AG04449 (cell line): ENCODE measurements at regions of chr6 and their contacts with region 1.

Region 1: DNA sequence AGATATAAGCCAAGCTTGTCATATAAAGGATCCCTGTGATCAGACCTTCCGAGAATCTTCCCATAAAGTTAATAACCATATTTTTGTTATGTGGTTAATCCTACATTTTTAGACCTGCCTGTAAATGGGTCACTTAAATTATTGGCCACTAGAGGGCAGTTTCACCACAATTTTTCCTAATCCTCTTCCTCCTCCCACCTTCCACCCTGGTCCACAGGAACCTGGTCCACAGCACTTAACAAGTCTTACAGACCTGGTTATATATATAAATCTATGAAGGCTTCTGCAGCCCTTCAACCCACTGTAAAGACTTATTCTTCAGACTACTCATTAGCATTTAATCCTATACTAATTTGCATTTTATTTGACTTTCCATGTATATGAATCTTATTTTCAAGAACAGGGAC is 28.3 kb downstream of the MRS2 start:
- DNase-seq: no peak
- H3K4me3 ChIP-seq: no peak overlapping the region
- CTCF ChIP-seq: peak; percentile 35

Region 2: GRCh38 chr6:24415753-24416152 is 15.3 kb before region 1 on chr6:
- CTCF ChIA-PET with region 1: interaction called, 13 read pairs
- POLR2A ChIA-PET with region 1: no interaction called
- DNase-seq: no peak
- H3K4me3 ChIP-seq: no peak overlapping the region
- CTCF ChIP-seq: no peak

Region 3: GRCh38 chr6:24444588-24444987 is 13.5 kb after region 1 on chr6:
- CTCF ChIA-PET with region 1: interaction called, 16 read pairs
- POLR2A ChIA-PET with region 1: no interaction called
- DNase-seq: no peak
- H3K4me3 ChIP-seq: no peak overlapping the region
- CTCF ChIP-seq: no peak

Region 4: DNA sequence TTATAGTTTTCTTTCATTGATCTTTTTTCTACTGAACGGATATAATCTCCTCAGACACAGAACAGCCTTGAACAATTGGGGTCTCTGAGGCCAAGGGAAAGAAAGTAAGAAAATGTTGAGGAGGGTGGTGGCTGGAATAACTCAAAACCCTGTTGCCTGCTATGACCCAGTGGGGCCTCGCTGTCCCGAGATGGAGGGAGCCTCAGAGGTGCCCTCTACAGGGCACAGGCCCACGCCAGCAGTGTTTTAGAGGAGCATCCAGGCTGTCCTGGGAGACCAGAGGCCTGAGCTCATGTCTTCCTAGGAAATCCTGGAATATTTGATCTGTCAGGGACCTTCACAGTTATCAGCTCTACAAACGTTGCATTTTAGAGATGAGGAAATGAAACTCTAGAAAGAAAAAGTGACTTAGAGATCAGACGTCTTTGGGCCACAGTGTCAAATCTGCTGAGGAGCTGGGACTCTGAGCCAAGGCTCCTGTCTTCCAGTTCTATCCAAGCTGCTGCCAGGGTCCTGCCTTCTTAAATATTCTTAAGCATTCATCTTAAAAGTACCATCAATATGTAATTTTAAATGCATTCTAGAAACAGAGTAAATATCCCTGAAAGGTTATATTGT is 90.0 kb after region 1 on chr6:
- CTCF ChIA-PET with region 1: interaction called, 26 read pairs
- POLR2A ChIA-PET with region 1: no interaction called
- DNase-seq: no peak
- H3K4me3 ChIP-seq: no peak overlapping the region
- CTCF ChIP-seq: peak; percentile 81

Region 5: DNA sequence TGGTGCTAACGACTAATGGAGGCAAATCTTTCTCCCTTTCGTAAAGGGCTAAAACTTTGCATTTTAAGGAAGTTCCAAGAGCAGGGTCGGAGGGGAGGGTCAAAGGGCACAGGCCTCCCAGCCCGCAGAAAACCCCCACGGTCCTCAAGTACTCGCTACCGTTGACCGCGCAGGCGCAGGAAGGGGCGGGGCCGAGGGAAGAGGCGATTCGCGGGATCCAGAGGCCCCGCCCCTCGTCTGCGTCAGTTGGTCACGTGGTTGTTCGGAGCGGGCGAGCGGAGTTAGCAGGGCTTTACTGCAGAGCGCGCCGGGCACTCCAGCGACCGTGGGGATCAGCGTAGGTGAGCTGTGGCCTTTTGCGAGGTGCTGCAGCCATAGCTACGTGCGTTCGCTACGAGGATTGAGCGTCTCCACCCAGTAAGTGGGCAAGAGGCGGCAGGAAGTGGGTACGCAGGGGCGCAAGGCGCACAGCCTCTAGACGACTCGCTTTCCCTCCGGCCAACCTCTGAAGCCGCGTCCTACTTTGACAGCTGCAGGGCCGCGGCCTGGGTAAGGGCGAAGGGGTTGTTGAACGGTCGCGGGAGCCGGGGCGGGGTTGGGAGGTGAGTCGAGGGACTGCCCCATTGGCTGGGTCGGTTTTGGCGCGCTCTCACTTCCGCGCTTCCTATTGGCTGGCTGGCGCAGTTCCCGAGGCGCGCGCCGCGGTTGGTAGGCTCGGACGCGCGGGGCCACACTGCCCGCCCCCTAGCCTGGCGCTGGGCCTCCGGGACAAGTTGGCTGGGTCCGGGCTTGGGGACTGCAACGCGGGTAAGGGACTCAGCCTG is 343.9 kb after region 1 on chr6 and contains the start of gene GMNN:
- CTCF ChIA-PET with region 1: no interaction called
- POLR2A ChIA-PET with region 1: no interaction called
- DNase-seq: no peak
- H3K4me3 ChIP-seq: peak within 1 kb of the TSS; percentile 100
- CTCF ChIP-seq: no peak

Region 6: DNA sequence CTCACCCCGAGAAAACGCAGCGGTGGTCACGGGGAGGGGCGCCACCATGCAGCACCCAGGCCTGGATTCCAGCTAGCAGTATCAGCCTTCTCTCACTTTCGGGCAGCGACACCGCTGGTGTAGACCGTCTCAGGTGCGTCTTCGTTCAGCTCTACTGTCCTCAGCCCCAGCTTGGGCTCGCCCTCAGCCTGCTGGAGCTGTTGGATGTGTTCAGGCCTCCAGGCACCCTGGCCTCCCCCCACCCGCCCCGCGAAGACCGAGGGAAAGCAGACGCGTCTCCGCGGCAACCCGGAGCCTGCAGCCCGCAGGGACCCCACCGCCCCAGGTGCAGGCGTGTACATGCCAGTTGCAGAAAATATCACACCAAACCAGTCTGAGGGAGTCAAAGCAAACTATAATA is 787.3 kb after region 1 on chr6:
- CTCF ChIA-PET with region 1: no interaction called
- POLR2A ChIA-PET with region 1: no interaction called
- DNase-seq: no peak
- H3K4me3 ChIP-seq: no peak overlapping the region
- CTCF ChIP-seq: no peak